Activated T-helper 1 cell treated with anti-CD3 and anti-CD28 coated beads, Interleukin-12 subunit alpha, Interleukin-12 subunit beta, Interleukin-2, Interleukin-4 antibody, amounts not matched to agents 30 ng/mL and 10 ng/mL and 1 ng/mL, durations not matched to agents 14 hours and 24 hours and 36 hours (primary cell): ENCODE measurements at regions of chr1 and their contacts with region 1.

Region 1: GRCh38 chr1:206684478-206685333 is at the start of gene MAPKAPK2:
- DNase-seq: peak; percentile 69
- H3K4me3 Mint-ChIP-seq: peak within 1 kb of the TSS; percentile 98
- H3K27ac Mint-ChIP-seq: peak within 1 kb of the TSS; percentile 96
- H3K4me1 Mint-ChIP-seq: peaks cover 72% of the 10 kb centered on the region
- H3K27me3 Mint-ChIP-seq: peaks cover 7% of the 10 kb centered on the region
- total RNA-seq, gene MAPKAPK2: 117 and 120 TPM in 2 replicates

Region 2: DNA sequence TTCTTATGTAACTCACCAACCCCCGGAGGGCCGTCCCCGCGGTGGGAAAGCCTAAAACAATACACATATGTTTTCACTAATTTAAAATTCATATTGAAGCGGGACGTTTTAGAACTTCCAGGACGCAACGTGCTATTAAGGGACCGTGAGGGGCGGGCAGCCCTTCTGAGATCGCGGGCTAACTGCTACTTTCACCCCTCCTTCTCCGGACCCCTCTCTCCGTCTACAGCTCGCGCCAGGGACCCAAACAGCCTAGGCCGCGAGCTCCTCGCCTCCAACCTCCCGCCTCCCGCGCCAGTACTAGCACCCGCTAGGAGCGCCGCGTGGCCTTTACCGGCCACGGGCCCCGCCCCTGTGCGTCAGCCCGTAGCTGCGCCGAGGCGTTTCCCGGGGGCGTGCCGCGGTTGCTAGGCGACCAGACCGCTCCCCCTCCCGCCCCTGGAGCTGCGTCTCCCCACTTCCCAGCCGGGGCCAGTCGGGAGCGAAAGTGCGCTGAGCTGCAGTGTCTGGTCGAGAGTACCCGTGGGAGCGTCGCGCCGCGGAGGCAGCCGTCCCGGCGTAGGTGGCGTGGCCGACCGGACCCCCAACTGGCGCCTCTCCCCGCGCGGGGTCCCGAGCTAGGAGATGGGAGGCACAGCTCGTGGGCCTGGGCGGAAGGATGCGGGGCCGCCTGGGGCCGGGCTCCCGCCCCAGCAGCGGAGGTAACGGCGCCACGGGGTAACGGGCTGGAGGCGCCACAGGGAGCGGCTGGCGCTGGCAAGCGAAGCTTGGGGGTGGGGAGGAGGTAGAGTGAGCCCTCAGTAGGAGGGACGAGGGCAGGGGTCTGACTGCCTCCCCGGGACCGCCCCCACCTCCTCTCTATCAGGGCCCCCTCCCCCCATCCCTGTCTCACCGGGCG is 49.4 kb before region 1 on chr1 and contains the start of gene DYRK3:
- intact Hi-C with region 1: loop called (anchors 1 kb)
- DNase-seq: peak; percentile 95
- H3K4me3 Mint-ChIP-seq: peak within 1 kb of the TSS; percentile 89
- H3K27ac Mint-ChIP-seq: peak within 1 kb of the TSS; percentile 95
- H3K4me1 Mint-ChIP-seq: peaks cover 38% of the 10 kb centered on the region
- H3K27me3 Mint-ChIP-seq: peaks cover 7% of the 10 kb centered on the region
- total RNA-seq, gene DYRK3: 22.1 and 23.3 TPM in 2 replicates

Region 3: DNA sequence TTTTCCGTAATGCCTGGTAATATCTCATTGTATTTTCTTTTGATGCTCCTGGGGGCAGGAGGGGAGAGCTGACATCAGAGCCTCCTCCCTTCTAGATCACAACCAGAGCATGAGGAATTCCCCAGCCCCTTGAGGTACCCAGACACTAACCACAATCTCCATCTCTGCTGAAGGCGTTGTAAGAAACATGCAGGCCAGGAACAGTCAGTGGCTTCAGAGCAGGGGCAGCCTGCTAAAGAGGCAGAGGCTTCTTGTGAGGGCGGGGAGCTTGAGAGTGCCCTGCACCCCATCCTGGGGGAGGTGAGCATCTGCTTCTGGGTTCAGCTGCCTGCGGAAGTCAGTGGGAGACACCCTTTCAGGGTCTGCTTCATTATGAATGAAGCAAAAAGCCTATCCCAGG is 19.0 kb after region 1 on chr1:
- intact Hi-C with region 1: loop called (anchors 1 kb)
- DNase-seq: peak; percentile 69
- H3K4me3 Mint-ChIP-seq: peak overlapping the region; percentile 73
- H3K27ac Mint-ChIP-seq: peak overlapping the region; percentile 77
- H3K4me1 Mint-ChIP-seq: peaks cover 93% of the 10 kb centered on the region
- H3K27me3 Mint-ChIP-seq: no peaks in the 10 kb centered on the region

Region 4: DNA sequence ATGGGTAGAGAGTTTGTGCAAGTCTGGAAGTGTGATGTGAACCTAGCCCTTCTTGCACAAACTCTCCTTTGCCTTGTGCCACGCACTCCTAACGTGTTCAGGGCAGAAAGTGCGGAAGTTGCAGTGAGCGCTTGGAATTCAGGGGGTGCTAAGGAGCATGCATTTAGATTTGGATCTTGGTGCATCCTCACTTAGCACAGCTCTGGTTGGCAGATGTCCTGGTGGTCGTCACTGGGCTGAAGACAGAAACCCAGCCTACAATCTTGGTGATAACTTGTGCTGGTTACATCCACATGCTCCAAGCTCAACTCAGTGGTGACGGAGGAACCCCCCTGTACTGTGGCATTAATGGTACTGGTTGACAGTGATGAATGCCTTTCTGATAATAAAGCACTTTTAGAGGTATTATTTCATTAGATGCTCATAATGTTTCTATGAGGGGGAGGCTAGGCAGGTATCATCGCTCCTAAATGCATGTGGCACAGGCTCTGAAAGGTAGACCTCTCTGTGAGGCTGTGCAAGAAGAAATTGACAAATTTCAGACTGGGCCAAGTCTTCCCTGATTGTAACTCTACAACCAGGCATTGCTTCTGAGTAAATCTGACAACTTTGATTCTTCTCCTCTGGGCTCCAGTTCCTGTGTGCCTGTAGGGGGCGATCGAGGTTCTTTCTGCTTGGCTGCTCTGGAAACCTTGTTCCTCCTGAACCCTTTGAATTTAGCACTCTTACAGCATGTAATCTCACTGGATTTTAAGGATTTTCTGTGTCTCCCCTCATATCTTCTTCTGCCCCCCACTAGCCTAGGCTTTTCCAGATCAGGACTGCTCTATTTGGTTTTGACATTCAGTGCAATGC is 40.6 kb after region 1 on chr1:
- intact Hi-C with region 1: loop called (anchors 1 kb)
- DNase-seq: peak; percentile 37
- H3K4me3 Mint-ChIP-seq: no peak overlapping the region
- H3K27ac Mint-ChIP-seq: peak overlapping the region; percentile 7
- H3K4me1 Mint-ChIP-seq: peaks cover 63% of the 10 kb centered on the region
- H3K27me3 Mint-ChIP-seq: no peaks in the 10 kb centered on the region